MCF 10A (cell line): ENCODE measurements at regions of chr2 and their contacts with region 1.

Region 1: GRCh38 chr2:31523871-31524492 is 56.8 kb downstream of the SRD5A2 start:
- DNase-seq: peak; percentile 70
- H3K4me3 Mint-ChIP-seq: no peak overlapping the region
- H3K27ac Mint-ChIP-seq: no peak overlapping the region
- H3K4me1 Mint-ChIP-seq: no peaks in the 10 kb centered on the region
- H3K27me3 Mint-ChIP-seq: no peaks in the 10 kb centered on the region
- CTCF ChIP-seq: peak; percentile 71

Region 2: GRCh38 chr2:31354837-31355236 is 169.1 kb before region 1 on chr2:
- CTCF ChIA-PET with region 1: interaction called, 4 read pairs
- POLR2A ChIA-PET with region 1: no interaction called
- intact Hi-C with region 1: loop called (anchors 5 kb)
- DNase-seq: peak; percentile 52
- H3K4me3 Mint-ChIP-seq: peak overlapping the region; percentile 50
- H3K27ac Mint-ChIP-seq: peak overlapping the region; percentile 87
- H3K4me1 Mint-ChIP-seq: peaks cover 7% of the 10 kb centered on the region
- H3K27me3 Mint-ChIP-seq: no peaks in the 10 kb centered on the region
- CTCF ChIP-seq: peak; percentile 44

Region 3: DNA sequence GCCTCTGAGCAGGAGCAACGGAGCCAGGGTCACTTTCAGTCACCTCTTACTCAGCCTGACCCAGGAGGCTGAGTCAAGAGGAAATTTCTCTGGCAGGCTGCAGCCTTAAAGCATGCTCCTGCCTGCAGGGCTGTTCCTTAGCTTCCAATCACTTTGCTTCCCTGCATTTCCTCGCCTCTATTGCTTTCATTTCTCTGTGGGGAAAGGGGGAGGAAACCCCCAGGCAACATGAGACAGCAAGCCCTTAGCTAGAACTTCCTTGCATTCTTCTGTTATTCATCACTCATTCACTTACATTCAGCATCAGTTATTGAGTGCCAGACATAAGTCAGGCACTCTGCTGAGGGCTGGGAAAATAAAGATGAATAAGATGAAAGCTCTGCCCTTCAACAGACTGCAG is 122.4 kb before region 1 on chr2:
- CTCF ChIA-PET with region 1: interaction called, 18 read pairs
- POLR2A ChIA-PET with region 1: interaction called, 3 read pairs
- intact Hi-C with region 1: no loop called
- DNase-seq: peak; percentile 98
- H3K4me3 Mint-ChIP-seq: no peak overlapping the region
- H3K27ac Mint-ChIP-seq: peak overlapping the region; percentile 31
- H3K4me1 Mint-ChIP-seq: peaks cover 42% of the 10 kb centered on the region
- H3K27me3 Mint-ChIP-seq: no peaks in the 10 kb centered on the region
- CTCF ChIP-seq: no peak

Region 4: GRCh38 chr2:31511376-31511775 is 12.6 kb before region 1 on chr2:
- CTCF ChIA-PET with region 1: interaction called, 11 read pairs
- POLR2A ChIA-PET with region 1: interaction called, 4 read pairs
- intact Hi-C with region 1: no loop called
- DNase-seq: no peak
- H3K4me3 Mint-ChIP-seq: no peak overlapping the region
- H3K27ac Mint-ChIP-seq: no peak overlapping the region
- H3K4me1 Mint-ChIP-seq: no peaks in the 10 kb centered on the region
- H3K27me3 Mint-ChIP-seq: no peaks in the 10 kb centered on the region
- CTCF ChIP-seq: no peak

Region 5: GRCh38 chr2:31729764-31730092 is 205.7 kb after region 1 on chr2:
- CTCF ChIA-PET with region 1: interaction called, 6 read pairs
- POLR2A ChIA-PET with region 1: interaction called, 3 read pairs
- intact Hi-C with region 1: loop called (anchors 1 kb)
- DNase-seq: peak; percentile 68
- H3K4me3 Mint-ChIP-seq: no peak overlapping the region
- H3K27ac Mint-ChIP-seq: no peak overlapping the region
- H3K4me1 Mint-ChIP-seq: no peaks in the 10 kb centered on the region
- H3K27me3 Mint-ChIP-seq: no peaks in the 10 kb centered on the region
- CTCF ChIP-seq: peak; percentile 65